ENCODE measurements at regions of chr7 and their contacts with region 1.

Region 1: DNA sequence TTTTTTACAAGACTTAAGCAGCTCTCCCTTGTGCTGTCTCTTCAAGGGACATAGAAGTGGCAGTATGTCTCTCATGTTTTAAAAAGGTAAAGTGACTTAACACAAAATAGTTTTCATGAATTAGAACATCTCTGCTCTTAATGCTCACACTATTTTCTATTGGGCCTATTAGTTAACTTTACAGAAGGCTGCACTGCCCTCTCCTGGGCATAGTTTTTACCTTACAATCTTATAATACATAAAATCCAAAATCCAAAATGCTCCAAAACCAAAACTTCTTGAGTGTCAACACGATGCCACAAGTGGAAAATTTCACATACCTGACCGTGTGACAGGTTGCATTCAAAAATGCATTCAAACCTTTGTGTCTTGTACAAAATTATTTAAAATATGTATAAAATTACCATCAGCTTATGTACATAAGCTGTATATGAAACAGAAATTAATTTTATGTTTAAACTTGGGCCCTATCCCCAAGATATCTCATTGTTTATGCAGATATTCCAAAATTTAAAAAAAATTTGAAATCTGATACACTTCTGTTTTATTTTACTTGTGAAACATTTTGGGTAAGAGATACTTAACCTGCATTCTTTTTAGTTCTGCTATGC is 25.8 kb downstream of the TES start:
- DNase-seq: peak; percentile 36 to 67 (median 52)
- H3K4me3 ChIP-seq: no peak overlapping the region
- H3K4me3 Mint-ChIP-seq: no peak overlapping the region
- H3K27ac ChIP-seq: no peak overlapping the region
- H3K27ac Mint-ChIP-seq: peak overlapping the region in 5 of 8 donors; percentile 0 to 77 (median 25)
- H3K4me1 ChIP-seq: peaks cover 43% of the 10 kb centered on the region
- H3K4me1 Mint-ChIP-seq: peaks cover 80 to 90% (median 87%) of the 10 kb centered on the region in 3 donors
- H3K27me3 ChIP-seq: no peaks in the 10 kb centered on the region
- H3K27me3 Mint-ChIP-seq: no peaks in the 10 kb centered on the region

Region 2: DNA sequence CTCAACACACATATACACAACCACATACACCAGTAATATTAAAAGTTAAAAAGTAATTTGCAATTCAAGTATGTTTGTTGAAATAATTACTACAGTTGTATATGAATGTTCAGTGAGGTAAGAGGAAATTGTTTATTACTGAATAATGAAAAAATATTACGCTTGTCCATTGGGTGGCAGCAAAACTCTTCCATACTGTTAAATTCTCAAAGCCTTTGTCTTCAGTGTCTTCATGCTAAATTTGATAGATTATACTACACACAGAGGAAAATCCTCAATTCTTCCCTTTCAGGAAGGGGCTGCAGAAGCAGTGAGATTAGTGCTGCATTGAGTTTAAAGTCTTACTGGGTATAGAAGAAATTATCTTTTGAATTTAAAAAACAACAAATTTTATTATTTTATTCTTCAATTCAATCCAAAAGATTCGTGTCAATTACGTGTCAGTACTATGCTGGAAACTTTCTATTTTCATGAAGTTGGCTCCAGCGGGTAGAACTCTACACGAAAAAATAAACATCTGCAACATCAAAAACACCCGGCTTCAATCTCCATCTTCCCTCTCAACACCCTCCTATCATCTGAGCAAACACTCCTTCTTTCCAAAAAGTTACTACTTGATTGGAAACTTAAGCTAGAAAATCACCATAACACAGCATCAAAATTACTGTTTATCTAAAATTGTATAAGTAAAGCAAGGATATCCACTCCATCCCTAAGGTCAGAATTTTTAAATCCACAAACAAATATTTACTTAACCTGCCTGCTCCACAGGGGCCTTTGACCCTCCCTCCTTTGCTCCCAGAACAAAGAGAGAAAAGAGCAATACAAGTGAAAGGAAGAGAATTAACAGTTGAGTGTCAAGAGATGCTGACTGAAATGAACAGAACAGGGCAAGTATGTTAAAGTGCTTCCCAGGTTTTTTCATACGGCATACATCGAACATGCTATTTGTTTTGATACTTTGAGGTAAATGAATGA is 62.8 kb before region 1 on chr7:
- CTCF ChIA-PET with region 1: interaction called, 167 read pairs
- POLR2A ChIA-PET with region 1: no interaction called
- DNase-seq: peak in 3 of 5 donors; percentile 4 to 52 (median 45)
- H3K4me3 ChIP-seq: no peak overlapping the region
- H3K4me3 Mint-ChIP-seq: no peak overlapping the region
- H3K27ac ChIP-seq: no peak overlapping the region
- H3K27ac Mint-ChIP-seq: no peak overlapping the region
- H3K4me1 ChIP-seq: no peaks in the 10 kb centered on the region
- H3K4me1 Mint-ChIP-seq: no peaks in the 10 kb centered on the region
- H3K27me3 ChIP-seq: no peaks in the 10 kb centered on the region
- H3K27me3 Mint-ChIP-seq: peaks cover 6 to 9% of the 10 kb centered on the region in 2 donors

Region 3: DNA sequence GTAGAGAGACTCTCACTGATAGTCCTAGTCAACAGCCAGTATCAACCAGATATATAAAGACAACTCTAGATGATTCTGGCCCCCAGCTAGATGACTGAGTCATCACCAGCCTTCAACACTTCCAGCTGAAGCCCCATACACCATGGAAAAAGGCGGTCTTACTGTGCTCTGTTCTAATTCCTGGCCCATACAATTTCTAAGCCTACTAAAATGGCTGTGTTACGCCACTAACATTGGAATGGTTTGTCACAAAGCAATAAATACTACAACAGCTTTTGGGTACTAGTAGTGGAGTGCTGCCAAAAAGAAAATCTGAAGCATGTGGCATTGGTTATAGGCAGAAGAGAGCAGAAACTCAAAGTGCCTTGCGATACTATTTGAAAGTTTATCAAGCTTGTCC is 38.8 kb before region 1 on chr7:
- CTCF ChIA-PET with region 1: interaction called, 23 read pairs
- POLR2A ChIA-PET with region 1: no interaction called
- DNase-seq: no peak
- H3K4me3 ChIP-seq: no peak overlapping the region
- H3K4me3 Mint-ChIP-seq: no peak overlapping the region
- H3K27ac ChIP-seq: no peak overlapping the region
- H3K27ac Mint-ChIP-seq: no peak overlapping the region
- H3K4me1 ChIP-seq: no peaks in the 10 kb centered on the region
- H3K4me1 Mint-ChIP-seq: no peaks in the 10 kb centered on the region
- H3K27me3 ChIP-seq: no peaks in the 10 kb centered on the region
- H3K27me3 Mint-ChIP-seq: peaks cover 0 to 4% of the 10 kb centered on the region in 2 donors

Region 4: GRCh38 chr7:116216956-116217571 is 19.1 kb before region 1 on chr7:
- CTCF ChIA-PET with region 1: interaction called, 71 read pairs
- POLR2A ChIA-PET with region 1: no interaction called
- DNase-seq: no peak
- H3K4me3 ChIP-seq: no peak overlapping the region
- H3K4me3 Mint-ChIP-seq: peak overlapping the region in 6 of 7 donors; percentile 13 to 56 (median 49)
- H3K27ac ChIP-seq: no peak overlapping the region
- H3K27ac Mint-ChIP-seq: peak overlapping the region in 5 of 8 donors; percentile 13 to 81 (median 67)
- H3K4me1 ChIP-seq: peaks cover 95% of the 10 kb centered on the region
- H3K4me1 Mint-ChIP-seq: peaks cover 92 to 98% (median 96%) of the 10 kb centered on the region in 3 donors
- H3K27me3 ChIP-seq: no peaks in the 10 kb centered on the region
- H3K27me3 Mint-ChIP-seq: no peaks in the 10 kb centered on the region

Region 5: DNA sequence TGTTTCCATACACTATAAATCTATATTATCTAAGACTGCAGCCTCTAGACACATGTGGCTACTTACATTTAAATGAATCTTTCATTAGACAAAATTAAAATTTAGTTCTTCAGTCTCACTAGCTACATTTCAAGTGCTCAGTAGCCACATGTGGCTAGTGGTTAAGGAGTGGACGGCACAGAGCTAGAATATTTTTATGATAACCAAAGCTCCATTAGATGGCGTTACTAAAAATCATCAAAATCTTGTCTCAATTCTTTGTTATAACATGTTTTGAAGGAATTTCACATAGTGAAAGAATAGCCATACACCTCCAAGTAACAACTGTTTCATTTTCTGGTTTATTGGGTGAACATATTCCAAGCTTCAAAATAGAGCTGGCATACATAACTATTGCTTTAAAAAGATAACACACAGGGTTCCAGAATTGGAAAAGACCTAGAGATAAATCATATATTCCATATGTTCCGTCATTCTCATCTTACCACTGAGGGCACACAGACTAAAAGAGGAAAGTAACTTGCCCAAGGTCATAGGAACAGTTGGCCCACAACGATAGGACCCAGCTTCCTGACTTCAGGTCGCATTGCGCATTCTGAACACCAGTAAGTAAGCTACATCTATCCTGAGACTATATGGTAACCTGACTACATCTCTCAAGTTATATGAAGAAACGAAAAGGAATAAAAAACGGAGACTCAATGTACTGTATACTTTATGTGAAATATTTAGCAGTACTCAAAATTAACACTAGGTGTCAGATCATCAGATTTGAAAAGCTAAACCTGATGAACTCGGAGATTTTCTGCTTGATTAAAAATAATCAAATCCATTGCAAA is 355.3 kb after region 1 on chr7:
- CTCF ChIA-PET with region 1: interaction called, 12 read pairs
- POLR2A ChIA-PET with region 1: no interaction called
- DNase-seq: peak in 1 of 5 donors; percentile 3
- H3K4me3 ChIP-seq: no peak overlapping the region
- H3K4me3 Mint-ChIP-seq: peak overlapping the region in 2 of 7 donors; percentile 20 to 36
- H3K27ac ChIP-seq: no peak overlapping the region
- H3K27ac Mint-ChIP-seq: no peak overlapping the region
- H3K4me1 ChIP-seq: no peaks in the 10 kb centered on the region
- H3K4me1 Mint-ChIP-seq: peaks cover 11 to 20% (median 18%) of the 10 kb centered on the region in 3 donors
- H3K27me3 ChIP-seq: peaks cover 3% of the 10 kb centered on the region
- H3K27me3 Mint-ChIP-seq: peaks cover 18 to 45% of the 10 kb centered on the region in 2 donors